CD8-positive, alpha-beta T cell (primary cell): ENCODE measurements at regions of chr5 and their contacts with region 1.

Region 1: DNA sequence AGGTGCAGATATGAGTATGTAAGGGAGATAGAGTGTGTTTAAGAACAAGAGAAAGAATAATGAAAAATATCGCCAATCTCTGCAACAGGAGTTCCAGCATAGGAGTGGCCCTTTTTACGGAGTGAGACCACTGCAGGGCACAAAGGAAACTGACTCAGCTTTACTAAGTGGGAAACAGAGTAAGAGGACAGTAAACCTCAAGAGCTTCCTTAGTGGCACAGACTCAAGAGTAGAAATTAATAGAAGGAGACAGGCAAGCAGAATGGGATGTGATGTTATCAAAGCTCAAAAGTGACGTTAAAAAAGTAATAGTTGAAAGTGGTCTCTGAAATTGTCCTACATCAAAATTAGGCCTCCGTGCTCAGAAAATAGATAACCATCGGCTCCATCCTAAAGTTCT is 2.1 kb upstream of the SH3RF2 start:
- DNase-seq: no peak
- ATAC-seq: no peak
- H3K4me3 ChIP-seq: no peak overlapping the region
- H3K4me3 Mint-ChIP-seq: no peak overlapping the region
- H3K27ac ChIP-seq: no peak overlapping the region
- H3K27ac Mint-ChIP-seq: no peak overlapping the region
- H3K4me1 ChIP-seq: no peaks in the 10 kb centered on the region
- H3K4me1 Mint-ChIP-seq: peaks cover 8% of the 10 kb centered on the region
- H3K27me3 ChIP-seq: peaks cover 0 to 2% of the 10 kb centered on the region in 2 experiments
- H3K27me3 Mint-ChIP-seq: peaks cover 19% of the 10 kb centered on the region
- CTCF ChIP-seq: no peak

Region 2: GRCh38 chr5:145920542-145921210 is 13.6 kb before region 1 on chr5:
- CTCF ChIA-PET with region 1: no interaction called
- POLR2A ChIA-PET with region 1: no interaction called
- intact Hi-C with region 1: loop called in 1 of 2 experiments (anchors 1 kb)
- DNase-seq: no peak
- ATAC-seq: no peak
- H3K4me3 ChIP-seq: no peak overlapping the region
- H3K4me3 Mint-ChIP-seq: no peak overlapping the region
- H3K27ac ChIP-seq: no peak overlapping the region
- H3K27ac Mint-ChIP-seq: no peak overlapping the region
- H3K4me1 ChIP-seq: no peaks in the 10 kb centered on the region
- H3K4me1 Mint-ChIP-seq: no peaks in the 10 kb centered on the region
- H3K27me3 ChIP-seq: no peaks in the 10 kb centered on the region
- H3K27me3 Mint-ChIP-seq: peaks cover 1% of the 10 kb centered on the region
- CTCF ChIP-seq: no peak

Region 3: GRCh38 chr5:146185161-146185560 is 250.9 kb after region 1 on chr5:
- CTCF ChIA-PET with region 1: no interaction called
- POLR2A ChIA-PET with region 1: no interaction called
- intact Hi-C with region 1: no loop called
- DNase-seq: no peak
- ATAC-seq: no peak
- H3K4me3 ChIP-seq: no peak overlapping the region
- H3K4me3 Mint-ChIP-seq: no peak overlapping the region
- H3K27ac ChIP-seq: no peak overlapping the region
- H3K27ac Mint-ChIP-seq: no peak overlapping the region
- H3K4me1 ChIP-seq: peaks cover 11% of the 10 kb centered on the region
- H3K4me1 Mint-ChIP-seq: peaks cover 18% of the 10 kb centered on the region
- H3K27me3 ChIP-seq: peaks cover 0 to 2% of the 10 kb centered on the region in 2 experiments
- H3K27me3 Mint-ChIP-seq: no peaks in the 10 kb centered on the region
- CTCF ChIP-seq: no peak